ENCODE measurements at regions of chr13 and their contacts with region 1.

Region 1: GRCh38 chr13:23563085-23563845 is 6.9 kb upstream of the TNFRSF19 start:
- DNase-seq: no peak
- ATAC-seq: no peak

Region 2: DNA sequence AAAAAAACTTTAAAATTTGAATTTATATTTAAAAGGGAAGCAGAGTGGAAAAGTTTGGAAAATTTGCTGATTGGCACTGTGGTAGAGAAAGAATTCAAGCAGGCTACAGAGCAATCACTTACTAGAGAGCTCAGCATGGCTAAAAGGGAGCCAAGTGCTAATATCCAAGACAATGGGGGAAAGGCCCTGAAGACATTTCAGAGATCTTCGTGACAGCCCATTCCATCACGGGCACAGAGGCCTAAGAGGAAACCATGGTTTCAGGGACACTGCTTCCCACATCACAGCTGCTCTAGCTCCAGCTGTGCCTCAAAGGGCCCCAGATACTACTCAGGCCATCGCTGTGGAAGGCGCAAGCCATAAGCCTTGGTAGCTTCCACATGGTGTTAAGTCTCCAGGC is 308.8 kb before region 1 on chr13:
- intact Hi-C with region 1: no loop called
- DNase-seq: no peak
- ATAC-seq: no peak

Region 3: GRCh38 chr13:23549724-23550123 is 13.5 kb before region 1 on chr13:
- intact Hi-C with region 1: loop called (anchors 2 kb)
- DNase-seq: no peak
- ATAC-seq: peak; percentile 53

Region 4: GRCh38 chr13:23867027-23867491 is 303.8 kb after region 1 on chr13:
- intact Hi-C with region 1: no loop called
- DNase-seq: no peak
- ATAC-seq: no peak